GM12878 (cell line): ENCODE measurements at regions of chr10 and their contacts with region 1.

Region 1: DNA sequence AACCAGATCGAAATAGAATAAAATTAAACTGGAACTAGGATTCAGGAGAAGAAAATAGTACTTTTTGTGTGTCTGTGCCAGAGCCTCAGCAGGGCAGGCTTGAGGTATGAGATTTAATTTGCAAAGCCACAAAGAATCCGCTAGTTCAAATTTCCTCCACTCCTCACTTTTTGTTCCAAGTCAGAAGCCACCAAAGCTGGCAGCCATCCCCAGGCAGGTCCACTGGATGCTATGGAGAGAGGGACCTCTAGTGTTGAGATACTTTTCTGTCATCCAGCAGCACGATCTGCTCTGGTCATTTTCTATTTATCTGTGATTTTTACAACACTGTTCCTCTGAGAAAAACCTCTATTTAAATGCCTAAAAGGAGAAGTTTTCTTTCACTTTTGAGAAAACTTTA is 147.9 kb upstream of the FRMD4A start:
- DNase-seq: no peak
- ATAC-seq: peak; percentile 69
- H3K4me3 ChIP-seq: no peak overlapping the region
- H3K27ac ChIP-seq: no peak overlapping the region
- H3K4me1 ChIP-seq: no peaks in the 10 kb centered on the region
- H3K27me3 ChIP-seq: peaks cover 0 to 2% of the 10 kb centered on the region in 2 experiments; a peak in 1 of 4 replicates
- CTCF ChIP-seq: peak; percentile 45 to 64 (median 56); a peak in 5 of 6 replicates
- EP300 ChIP-seq: no peak
- POLR2A ChIP-seq: no peak
- RAD21 ChIP-seq: peak; percentile 63

Region 2: GRCh38 chr10:14191871-14192270 is 286.7 kb before region 1 on chr10:
- CTCF ChIA-PET with region 1: interaction called, 63 read pairs
- POLR2A ChIA-PET with region 1: interaction called, 3 read pairs
- RAD21 ChIA-PET with region 1: interaction called, 27 read pairs
- SMC1A ChIA-PET with region 1: interaction called, 52 read pairs
- in situ Hi-C with region 1: no loop called
- intact Hi-C with region 1: loop called (anchors 1 kb)
- DNase-seq: no peak
- ATAC-seq: no peak
- H3K4me3 ChIP-seq: no peak overlapping the region
- H3K27ac ChIP-seq: no peak overlapping the region
- H3K4me1 ChIP-seq: no peaks in the 10 kb centered on the region
- H3K27me3 ChIP-seq: peaks cover 0 to 3% of the 10 kb centered on the region in 2 experiments; a peak in 2 of 4 replicates
- CTCF ChIP-seq: no peak
- EP300 ChIP-seq: no peak
- POLR2A ChIP-seq: no peak
- RAD21 ChIP-seq: no peak

Region 3: GRCh38 chr10:14200698-14201544 is 277.7 kb before region 1 on chr10:
- CTCF ChIA-PET with region 1: interaction called, 63 read pairs
- POLR2A ChIA-PET with region 1: interaction called, 3 read pairs
- RAD21 ChIA-PET with region 1: interaction called, 27 read pairs
- SMC1A ChIA-PET with region 1: interaction called, 52 read pairs
- in situ Hi-C with region 1: loop called (anchors 5 kb)
- intact Hi-C with region 1: loop called (anchors 1 kb)
- DNase-seq: no peak
- ATAC-seq: no peak
- H3K4me3 ChIP-seq: no peak overlapping the region
- H3K27ac ChIP-seq: no peak overlapping the region
- H3K4me1 ChIP-seq: no peaks in the 10 kb centered on the region
- H3K27me3 ChIP-seq: no peaks in the 10 kb centered on the region; a peak in 1 of 4 replicates
- CTCF ChIP-seq: peak; percentile 12 to 35 (median 24); a peak in 3 of 6 replicates
- EP300 ChIP-seq: no peak
- POLR2A ChIP-seq: no peak
- RAD21 ChIP-seq: no peak

Region 4: DNA sequence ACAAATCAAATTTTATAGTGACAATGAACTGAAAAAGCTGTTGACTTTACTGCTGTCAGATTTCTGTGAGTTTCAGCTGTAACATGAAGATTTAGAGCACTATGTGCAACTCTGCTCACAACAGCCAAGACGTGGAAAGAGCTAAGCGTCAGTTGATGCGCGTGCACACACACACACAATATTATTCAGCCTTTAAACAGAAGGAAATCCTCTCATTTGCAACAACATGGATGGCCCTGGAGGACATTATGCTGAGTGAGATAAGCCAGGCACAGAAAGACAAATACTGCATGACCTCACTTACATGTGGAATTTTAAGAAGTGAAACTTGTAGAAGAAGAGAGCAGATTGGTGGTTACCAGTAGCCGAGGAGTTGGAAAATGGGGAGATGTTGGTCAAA is 65.1 kb before region 1 on chr10:
- CTCF ChIA-PET with region 1: no interaction called
- POLR2A ChIA-PET with region 1: no interaction called
- RAD21 ChIA-PET with region 1: no interaction called
- SMC1A ChIA-PET with region 1: no interaction called
- in situ Hi-C with region 1: no loop called
- intact Hi-C with region 1: no loop called
- DNase-seq: no peak
- ATAC-seq: no peak
- H3K4me3 ChIP-seq: no peak overlapping the region
- H3K27ac ChIP-seq: no peak overlapping the region
- H3K4me1 ChIP-seq: no peaks in the 10 kb centered on the region
- H3K27me3 ChIP-seq: no peaks in the 10 kb centered on the region
- CTCF ChIP-seq: no peak
- EP300 ChIP-seq: no peak
- POLR2A ChIP-seq: no peak
- RAD21 ChIP-seq: no peak

Region 5: DNA sequence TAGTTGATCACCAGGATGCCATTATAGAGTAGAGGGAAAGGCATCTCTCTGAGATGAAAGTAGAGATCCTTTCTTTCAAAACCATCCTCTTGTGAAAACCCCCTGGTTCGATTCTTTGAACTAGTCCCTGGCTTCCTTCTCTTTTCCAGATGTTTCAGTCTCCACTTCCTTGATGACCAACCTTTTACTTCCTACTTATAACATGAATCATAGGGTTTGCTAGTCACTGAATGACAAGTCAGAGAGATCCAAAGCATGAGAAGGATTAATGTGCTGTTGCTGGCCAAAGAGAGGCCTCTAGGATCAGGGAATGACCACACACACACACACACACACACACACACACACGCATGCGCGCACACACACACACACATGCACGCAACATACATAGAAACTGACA is 13.2 kb after region 1 on chr10:
- CTCF ChIA-PET with region 1: no interaction called
- POLR2A ChIA-PET with region 1: no interaction called
- RAD21 ChIA-PET with region 1: no interaction called
- SMC1A ChIA-PET with region 1: no interaction called
- in situ Hi-C with region 1: no loop called
- intact Hi-C with region 1: no loop called
- DNase-seq: no peak
- ATAC-seq: no peak
- H3K4me3 ChIP-seq: no peak overlapping the region
- H3K27ac ChIP-seq: no peak overlapping the region
- H3K4me1 ChIP-seq: no peaks in the 10 kb centered on the region
- H3K27me3 ChIP-seq: peaks cover 0 to 2% of the 10 kb centered on the region in 2 experiments; a peak in 2 of 4 replicates
- CTCF ChIP-seq: no peak
- EP300 ChIP-seq: no peak
- POLR2A ChIP-seq: no peak
- RAD21 ChIP-seq: no peak